Activated CD4-positive, alpha-beta T cell treated with anti-CD3 and anti-CD28 coated beads, Interleukin-2, amount 10 ng/mL, durations not matched to agents 24 days and 14 days (primary cell): ENCODE measurements at regions of chr9 and their contacts with region 1.

Region 1: DNA sequence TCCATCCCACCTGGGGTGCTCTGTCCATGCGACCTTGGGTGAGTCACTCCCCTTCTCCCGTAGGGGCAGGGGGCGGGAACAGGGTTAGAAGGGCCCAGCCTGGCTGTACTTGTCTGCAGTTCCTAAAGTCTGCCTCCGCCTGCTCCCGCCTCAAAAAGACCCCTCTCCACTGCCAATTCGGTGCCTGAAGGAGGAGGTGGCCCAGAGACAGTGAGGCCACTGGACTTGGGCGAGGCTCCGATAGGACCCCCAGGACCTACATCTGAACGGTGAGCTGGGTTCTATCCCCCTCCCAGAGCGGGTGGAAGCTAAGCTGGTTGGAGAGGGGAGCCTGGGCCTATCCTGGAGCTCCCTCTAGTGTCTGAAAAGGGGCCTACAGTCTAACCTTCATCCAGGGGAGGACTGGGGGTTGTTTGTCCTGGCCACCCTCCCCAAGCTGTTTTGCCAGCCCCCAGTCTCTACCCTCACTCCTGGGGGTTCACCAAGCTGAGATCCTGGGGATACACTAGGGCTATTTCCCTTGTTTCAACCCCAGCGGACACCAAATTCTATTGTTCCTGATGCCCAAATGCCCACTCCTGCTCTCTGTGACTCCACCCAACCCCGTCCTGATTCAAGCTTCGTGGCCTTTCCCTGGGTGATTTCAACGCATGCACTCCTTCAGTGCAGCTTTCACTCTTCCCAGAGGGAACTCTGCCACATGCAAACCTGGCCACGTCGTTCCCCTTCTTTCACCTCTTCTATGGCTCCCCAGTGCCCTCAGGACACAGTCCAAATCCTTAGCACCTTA is 6.1 kb upstream of the CRB2 start:
- DNase-seq: peak; percentile 92
- H3K4me3 Mint-ChIP-seq: no peak overlapping the region
- H3K27ac Mint-ChIP-seq: no peak overlapping the region
- H3K4me1 Mint-ChIP-seq: peaks cover 6% of the 10 kb centered on the region
- H3K27me3 Mint-ChIP-seq: peaks cover 6% of the 10 kb centered on the region

Region 2: GRCh38 chr9:122464633-122465567 is 885.0 kb before region 1 on chr9:
- intact Hi-C with region 1: loop called (anchors 10 kb)
- DNase-seq: peak; percentile 90
- H3K4me3 Mint-ChIP-seq: peak overlapping the region; percentile 86
- H3K27ac Mint-ChIP-seq: peak overlapping the region; percentile 81
- H3K4me1 Mint-ChIP-seq: peaks cover 12% of the 10 kb centered on the region
- H3K27me3 Mint-ChIP-seq: peaks cover 34% of the 10 kb centered on the region

Region 3: GRCh38 chr9:122827761-122828093 is 522.2 kb before region 1 on chr9:
- intact Hi-C with region 1: loop called (anchors 5 kb)
- DNase-seq: no peak
- H3K4me3 Mint-ChIP-seq: peak overlapping the region; percentile 93
- H3K27ac Mint-ChIP-seq: peak overlapping the region; percentile 94
- H3K4me1 Mint-ChIP-seq: peaks cover 23% of the 10 kb centered on the region
- H3K27me3 Mint-ChIP-seq: no peaks in the 10 kb centered on the region

Region 4: DNA sequence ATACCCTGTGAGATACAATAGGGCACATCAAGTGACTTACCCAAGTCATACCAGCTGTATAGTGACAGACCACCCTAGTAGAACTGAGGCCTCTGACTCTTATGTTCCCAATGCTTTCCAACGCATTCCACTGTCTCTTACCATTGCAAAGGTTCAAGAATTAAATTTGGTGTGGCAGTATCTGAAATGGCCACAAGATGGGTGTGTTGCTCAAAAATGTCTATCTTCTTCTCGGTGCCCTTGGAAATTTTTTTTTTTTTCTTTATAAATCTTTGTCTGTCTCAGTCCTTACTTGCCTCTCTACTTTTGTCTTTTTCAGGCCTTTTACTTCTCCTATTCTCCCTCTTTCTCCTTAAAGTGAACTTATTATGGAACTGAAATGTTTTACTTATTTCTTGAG is 268.1 kb before region 1 on chr9:
- intact Hi-C with region 1: loop called (anchors 1 kb)
- DNase-seq: peak; percentile 74
- H3K4me3 Mint-ChIP-seq: no peak overlapping the region
- H3K27ac Mint-ChIP-seq: no peak overlapping the region
- H3K4me1 Mint-ChIP-seq: peaks cover 2% of the 10 kb centered on the region
- H3K27me3 Mint-ChIP-seq: no peaks in the 10 kb centered on the region

Region 5: GRCh38 chr9:123389070-123389469 is 39.2 kb after region 1 on chr9:
- intact Hi-C with region 1: loop called (anchors 1 kb)
- DNase-seq: no peak
- H3K4me3 Mint-ChIP-seq: no peak overlapping the region
- H3K27ac Mint-ChIP-seq: no peak overlapping the region
- H3K4me1 Mint-ChIP-seq: no peaks in the 10 kb centered on the region
- H3K27me3 Mint-ChIP-seq: no peaks in the 10 kb centered on the region